BJ (cell line): ENCODE measurements at regions of chr9 and their contacts with region 1.

Region 1: DNA sequence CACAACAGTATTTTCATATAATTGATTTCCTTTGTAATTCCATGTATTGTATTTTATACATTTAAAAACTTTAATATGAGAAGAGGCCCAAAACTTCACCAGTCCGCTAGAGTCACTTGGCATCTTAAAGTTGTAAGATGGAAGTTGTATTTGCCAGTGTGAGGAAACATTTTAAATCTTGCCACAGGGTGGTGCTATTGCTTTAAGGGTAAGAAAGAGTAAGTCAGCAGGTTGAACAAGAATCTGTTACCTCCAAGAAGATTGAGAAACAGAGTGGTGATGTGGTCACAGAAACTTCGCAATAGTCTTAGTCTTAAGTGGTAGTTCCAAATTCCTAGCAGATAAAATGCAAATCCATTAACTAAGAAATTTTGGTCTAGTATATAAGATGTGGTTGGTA is 39.8 kb upstream of the RANBP6 start:
- DNase-seq: peak; percentile 56
- H3K4me3 ChIP-seq: no peak overlapping the region
- H3K27me3 ChIP-seq: peaks cover 3% of the 10 kb centered on the region; the same call in 1 of the 2 replicates
- CTCF ChIP-seq: peak; percentile 52

Region 2: GRCh38 chr9:5879419-5880181 is 175.6 kb before region 1 on chr9:
- CTCF ChIA-PET with region 1: interaction called, 51 read pairs
- POLR2A ChIA-PET with region 1: no interaction called
- DNase-seq: peak; percentile 39
- H3K4me3 ChIP-seq: no peak overlapping the region
- H3K27me3 ChIP-seq: no peaks in the 10 kb centered on the region
- CTCF ChIP-seq: no peak

Region 3: GRCh38 chr9:5886114-5886939 is 168.9 kb before region 1 on chr9:
- CTCF ChIA-PET with region 1: interaction called, 51 read pairs
- POLR2A ChIA-PET with region 1: interaction called, 3 read pairs
- DNase-seq: no peak
- H3K4me3 ChIP-seq: no peak overlapping the region
- H3K27me3 ChIP-seq: no peaks in the 10 kb centered on the region
- CTCF ChIP-seq: peak; percentile 97

Region 4: DNA sequence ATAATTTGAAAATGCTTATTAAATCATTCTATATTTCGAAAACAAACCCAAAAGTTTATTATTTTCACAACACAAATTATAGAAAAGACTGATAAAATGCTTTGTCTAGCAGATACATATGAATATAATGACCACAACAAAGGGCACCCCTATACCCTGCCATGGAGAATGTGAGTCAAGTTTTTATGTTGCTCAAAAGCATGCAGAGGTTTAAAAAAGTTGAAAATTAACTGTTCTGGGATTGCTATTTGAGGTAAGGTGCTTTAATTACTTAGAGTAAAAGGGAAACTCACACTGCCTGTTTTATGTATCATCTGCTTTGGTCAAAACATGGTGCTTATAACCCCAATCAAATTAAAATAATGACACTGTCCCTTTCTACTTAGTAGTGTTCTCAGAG is 123.6 kb before region 1 on chr9:
- CTCF ChIA-PET with region 1: no interaction called
- POLR2A ChIA-PET with region 1: no interaction called
- DNase-seq: no peak
- H3K4me3 ChIP-seq: no peak overlapping the region
- H3K27me3 ChIP-seq: no peaks in the 10 kb centered on the region
- CTCF ChIP-seq: no peak

Region 5: GRCh38 chr9:5976674-5977397 is 78.4 kb before region 1 on chr9:
- CTCF ChIA-PET with region 1: no interaction called
- POLR2A ChIA-PET with region 1: no interaction called
- DNase-seq: no peak
- H3K4me3 ChIP-seq: no peak overlapping the region
- H3K27me3 ChIP-seq: no peaks in the 10 kb centered on the region
- CTCF ChIP-seq: no peak

Region 6: DNA sequence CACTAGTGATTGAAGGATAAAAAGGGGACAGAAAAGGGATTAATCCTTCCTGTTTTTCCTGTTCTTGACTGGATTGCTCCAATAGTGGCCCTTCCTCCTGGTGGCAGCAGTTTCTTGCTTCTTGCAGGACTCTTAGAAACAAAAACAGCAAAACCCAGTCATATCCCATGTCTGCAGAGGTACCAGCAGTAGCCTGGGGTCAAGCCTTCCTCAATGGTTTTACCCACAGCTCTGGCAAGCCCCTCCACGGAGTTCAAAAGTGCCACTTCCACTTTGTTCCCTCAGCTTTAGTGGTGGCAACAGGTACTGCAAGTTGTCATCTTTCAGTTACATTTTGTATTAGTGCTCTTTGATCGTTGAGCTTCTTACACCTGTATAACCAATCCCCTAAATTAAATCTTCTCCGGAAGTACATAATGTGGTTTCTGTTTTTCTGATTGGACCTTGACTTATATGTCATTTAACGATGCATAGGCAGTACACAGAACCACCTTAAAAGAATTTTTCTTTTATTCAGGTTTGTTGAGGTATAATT is 31.1 kb before region 1 on chr9:
- CTCF ChIA-PET with region 1: interaction called, 17 read pairs
- POLR2A ChIA-PET with region 1: no interaction called
- DNase-seq: no peak
- H3K4me3 ChIP-seq: no peak overlapping the region
- H3K27me3 ChIP-seq: no peaks in the 10 kb centered on the region
- CTCF ChIP-seq: peak; percentile 54

Region 7: GRCh38 chr9:6068983-6069382 is 13.8 kb after region 1 on chr9:
- CTCF ChIA-PET with region 1: interaction called, 17 read pairs
- POLR2A ChIA-PET with region 1: no interaction called
- DNase-seq: no peak
- H3K4me3 ChIP-seq: no peak overlapping the region
- H3K27me3 ChIP-seq: no peaks in the 10 kb centered on the region
- CTCF ChIP-seq: no peak

Region 8: GRCh38 chr9:6305954-6306563 is 250.8 kb after region 1 on chr9:
- CTCF ChIA-PET with region 1: interaction called, 91 read pairs
- POLR2A ChIA-PET with region 1: interaction called, 3 read pairs
- DNase-seq: no peak
- H3K4me3 ChIP-seq: no peak overlapping the region
- H3K27me3 ChIP-seq: no peaks in the 10 kb centered on the region
- CTCF ChIP-seq: peak; percentile 42

Region 9: DNA sequence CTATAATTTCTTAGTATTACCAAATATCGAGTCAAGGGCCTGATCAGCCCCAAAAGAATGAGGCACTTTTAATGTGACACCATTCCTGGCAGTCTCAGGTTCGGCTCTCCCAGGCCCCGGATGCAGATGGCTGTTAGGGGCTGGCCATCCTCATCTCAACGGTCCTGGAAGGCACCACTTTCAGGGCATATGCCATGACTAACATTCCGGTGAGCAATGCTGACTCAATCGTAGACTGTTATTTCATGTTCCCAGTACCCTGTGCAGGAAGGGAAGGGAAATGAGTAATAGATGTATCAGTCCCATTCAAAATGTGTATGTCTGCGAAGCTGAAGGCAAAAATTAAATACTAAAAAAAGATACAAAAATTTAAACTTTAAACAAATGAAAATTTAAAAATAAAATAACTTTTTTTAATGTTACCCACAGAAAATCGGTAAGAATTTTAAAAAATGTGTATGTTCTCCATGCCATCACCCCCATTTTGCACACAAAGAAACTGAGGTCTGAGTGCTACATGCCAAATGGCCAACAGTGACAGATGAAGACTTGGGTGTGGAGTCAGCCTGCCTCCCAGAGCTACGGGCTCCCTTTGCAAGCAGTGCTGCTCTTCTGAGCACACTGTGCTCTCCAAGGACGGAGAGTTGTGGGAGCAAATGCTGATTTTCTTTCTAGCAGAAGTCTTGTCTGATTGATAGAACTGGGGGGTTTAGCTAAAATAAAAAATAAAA is 511.4 kb after region 1 on chr9:
- CTCF ChIA-PET with region 1: interaction called, 10 read pairs
- POLR2A ChIA-PET with region 1: no interaction called
- DNase-seq: peak; percentile 85
- H3K4me3 ChIP-seq: peak overlapping the region; percentile 29
- H3K27me3 ChIP-seq: no peaks in the 10 kb centered on the region
- CTCF ChIP-seq: no peak